Posterior cingulate gyrus (tissue), 11 donors: ENCODE measurements at regions of chr1 and their contacts with region 1.

Region 1: GRCh38 chr1:32215629-32216480 is 6.3 kb downstream of the TMEM234 start:
- DNase-seq: peak in 9 of 10 donors; percentile 45 to 94 (median 65)

Region 2: GRCh38 chr1:32335790-32336590 is 120.1 kb after region 1 on chr1 and contains the start of gene MARCKSL1:
- intact Hi-C with region 1: loop called (anchors 10 kb)
- DNase-seq: peak; percentile 78 to 98 (median 87)

Region 3: DNA sequence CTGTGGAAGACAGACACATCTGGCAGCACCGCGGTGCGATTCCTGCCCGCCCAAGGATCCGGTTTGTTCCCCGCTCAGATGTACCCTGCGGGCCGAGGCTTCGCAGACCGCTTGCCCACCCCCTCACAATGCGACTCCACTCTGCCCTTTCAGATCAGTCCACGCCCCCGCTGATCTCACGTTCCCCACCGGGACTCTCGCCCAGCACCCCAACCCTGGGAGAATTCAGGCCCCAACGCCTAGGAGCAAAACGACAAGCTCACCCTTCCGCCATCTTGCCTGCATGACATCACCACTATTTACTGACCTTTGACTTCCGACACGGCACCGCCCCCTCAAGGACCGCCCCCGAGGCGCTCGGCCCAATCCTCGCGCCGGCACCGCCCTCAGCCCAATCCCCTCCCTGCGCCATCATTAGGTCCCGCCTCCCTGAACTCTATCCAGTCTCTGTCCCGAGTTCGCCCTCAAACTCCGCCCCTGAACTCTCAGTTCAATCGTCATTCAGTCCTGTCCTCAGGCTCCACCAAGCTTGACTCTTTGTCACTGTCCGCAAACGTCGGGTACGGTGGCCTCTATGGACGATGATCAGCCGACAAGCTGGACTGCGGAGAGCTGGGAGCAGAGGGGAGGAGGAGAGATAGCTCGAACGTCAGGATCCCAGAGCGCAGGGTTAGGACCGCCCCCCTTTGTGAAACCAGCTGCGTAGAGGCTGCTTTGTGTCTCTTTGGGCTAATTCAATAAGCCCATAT is 178.5 kb after region 1 on chr1 and contains the start of gene BSDC1:
- intact Hi-C with region 1: loop called (anchors 10 kb)
- DNase-seq: peak; percentile 97 to 100 (median 98)